ENCODE measurements at regions of chr17 and their contacts with region 1.

Region 1: GRCh38 chr17:42388381-42389134 is at the start of gene STAT3:
- DNase-seq: peak; percentile 100
- ATAC-seq: peak; percentile 97
- H3K4me3 Mint-ChIP-seq: peak within 1 kb of the TSS; percentile 94
- H3K27ac Mint-ChIP-seq: peak within 1 kb of the TSS; percentile 98
- H3K4me1 Mint-ChIP-seq: peaks cover 41% of the 10 kb centered on the region
- H3K27me3 Mint-ChIP-seq: no peaks in the 10 kb centered on the region
- CTCF ChIP-seq: no peak
- total RNA-seq, gene STAT3: 74.4 to 98.0 TPM (median 74.9 TPM) in 3 replicates

Region 2: DNA sequence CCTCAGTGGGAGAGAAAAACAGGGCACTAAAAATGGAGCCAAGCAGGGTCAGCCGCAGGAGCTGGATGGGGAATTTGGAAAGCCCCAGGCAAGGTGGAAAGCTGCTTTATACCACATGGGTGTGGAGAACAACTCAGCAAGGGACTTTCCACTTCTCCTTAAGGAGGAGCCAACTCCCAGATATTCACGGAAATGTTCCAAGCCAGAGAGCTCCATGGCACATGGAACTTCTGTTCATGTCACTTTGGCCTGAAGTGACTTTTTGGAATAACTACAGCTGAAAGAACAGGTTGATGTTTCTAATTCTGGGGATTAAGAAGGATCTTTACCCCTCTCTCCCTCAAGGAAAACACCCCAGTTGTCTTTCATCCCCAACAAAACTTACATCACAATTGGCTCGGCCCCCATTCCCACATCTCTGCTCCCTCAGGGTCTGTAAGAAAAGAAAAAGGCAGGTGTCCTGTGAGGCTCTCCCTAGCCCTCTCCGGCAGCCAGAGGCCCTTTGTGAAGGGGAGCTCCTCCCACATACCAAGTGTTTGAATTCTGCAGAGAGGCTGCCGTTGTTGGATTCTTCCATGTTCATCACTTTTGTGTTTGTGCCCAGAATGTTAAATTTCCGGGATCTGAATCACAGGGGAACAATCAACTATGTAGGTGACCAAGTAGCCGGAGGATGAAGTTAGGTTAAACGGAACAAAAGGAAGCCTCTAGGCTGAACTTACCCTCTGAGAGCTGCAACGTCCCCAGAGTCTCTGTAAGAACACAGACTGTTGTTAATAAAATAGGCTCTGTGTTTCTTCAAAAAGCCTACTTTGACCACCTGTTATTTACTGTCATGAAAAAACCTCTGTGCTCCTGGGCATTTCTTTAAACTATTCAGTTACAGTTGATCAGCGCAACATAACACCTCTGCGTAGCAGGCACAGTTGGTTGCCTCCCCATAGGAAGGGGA is 59.3 kb before region 1 on chr17:
- CTCF ChIA-PET with region 1: interaction called, 8 read pairs
- POLR2A ChIA-PET with region 1: interaction called, 13 read pairs
- DNase-seq: peak; percentile 76
- ATAC-seq: peak; percentile 99
- H3K4me3 Mint-ChIP-seq: peak overlapping the region; percentile 38
- H3K27ac Mint-ChIP-seq: peak overlapping the region; percentile 97
- H3K4me1 Mint-ChIP-seq: peaks cover 30% of the 10 kb centered on the region
- H3K27me3 Mint-ChIP-seq: no peaks in the 10 kb centered on the region; the same call in 1 of the 2 replicates
- CTCF ChIP-seq: no peak

Region 3: GRCh38 chr17:42399948-42400843 is 11.6 kb after region 1 on chr17:
- CTCF ChIA-PET with region 1: interaction called, 41 read pairs
- POLR2A ChIA-PET with region 1: interaction called, 11 read pairs
- DNase-seq: no peak
- ATAC-seq: peak; percentile 73
- H3K4me3 Mint-ChIP-seq: no peak overlapping the region
- H3K27ac Mint-ChIP-seq: peak overlapping the region; percentile 96
- H3K4me1 Mint-ChIP-seq: peaks cover 43% of the 10 kb centered on the region
- H3K27me3 Mint-ChIP-seq: no peaks in the 10 kb centered on the region; the same call in 1 of the 2 replicates
- CTCF ChIP-seq: no peak

Region 4: GRCh38 chr17:42422958-42423712 is 34.6 kb after region 1 on chr17 and contains the start of gene CAVIN1:
- CTCF ChIA-PET with region 1: interaction called, 8 read pairs
- POLR2A ChIA-PET with region 1: interaction called, 23 read pairs
- DNase-seq: peak; percentile 97
- ATAC-seq: peak; percentile 86
- H3K4me3 Mint-ChIP-seq: peak within 1 kb of the TSS; percentile 95
- H3K27ac Mint-ChIP-seq: peak within 1 kb of the TSS; percentile 93
- H3K4me1 Mint-ChIP-seq: peaks cover 31% of the 10 kb centered on the region
- H3K27me3 Mint-ChIP-seq: peaks cover 57% of the 10 kb centered on the region
- CTCF ChIP-seq: no peak
- total RNA-seq, gene CAVIN1: 24.6 to 28.4 TPM (median 27.8 TPM) in 3 replicates

Region 5: GRCh38 chr17:42438600-42439567 is 50.3 kb after region 1 on chr17:
- CTCF ChIA-PET with region 1: no interaction called
- POLR2A ChIA-PET with region 1: no interaction called
- DNase-seq: peak; percentile 50
- ATAC-seq: peak; percentile 64
- H3K4me3 Mint-ChIP-seq: no peak overlapping the region
- H3K27ac Mint-ChIP-seq: no peak overlapping the region
- H3K4me1 Mint-ChIP-seq: peaks cover 8% of the 10 kb centered on the region
- H3K27me3 Mint-ChIP-seq: no peaks in the 10 kb centered on the region
- CTCF ChIP-seq: no peak